ENCODE measurements at regions of chr2 and their contacts with region 1.

Region 1: GRCh38 chr2:179751163-179751809 is 110.1 kb downstream of the ZNF385B start:
- DNase-seq: peak; percentile 9
- H3K4me3 ChIP-seq: no peak overlapping the region
- H3K27ac ChIP-seq: no peak overlapping the region
- H3K4me1 ChIP-seq: no peaks in the 10 kb centered on the region
- H3K27me3 ChIP-seq: no peaks in the 10 kb centered on the region
- CTCF ChIP-seq: peak; percentile 54 to 59

Region 2: DNA sequence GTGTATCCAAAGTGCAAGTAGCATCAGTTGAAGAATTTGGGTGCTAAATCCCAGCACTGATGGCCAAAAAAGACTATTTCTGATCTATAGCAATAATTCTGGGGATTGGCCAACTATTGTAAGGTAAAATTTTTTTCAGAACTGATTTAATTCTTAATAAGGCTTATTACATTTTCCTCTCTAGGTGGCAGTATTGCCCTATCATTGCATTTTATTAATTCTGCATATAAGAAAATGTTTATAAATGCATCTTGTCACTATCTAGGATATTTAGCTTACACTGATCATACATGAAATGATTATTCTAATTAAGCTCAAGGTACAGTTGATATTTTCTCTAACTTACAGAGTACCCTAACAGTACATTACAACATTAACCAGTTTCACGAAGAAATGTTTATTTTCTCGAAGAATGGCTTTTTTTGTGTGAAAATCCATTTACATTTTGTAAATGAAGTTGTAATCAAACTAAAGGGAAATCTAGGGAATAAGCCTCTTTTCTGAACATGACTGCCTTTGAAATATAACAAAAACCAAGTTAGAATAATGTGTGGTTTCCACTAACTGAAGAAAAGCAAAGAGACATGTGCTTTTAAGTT is 955.1 kb before region 1 on chr2:
- CTCF ChIA-PET with region 1: no interaction called
- dilution Hi-C with region 1: no loop called
- in situ Hi-C with region 1: no loop called
- intact Hi-C with region 1: loop called (anchors 2 kb)
- DNase-seq: peak; percentile 10
- H3K4me3 ChIP-seq: no peak overlapping the region
- H3K27ac ChIP-seq: no peak overlapping the region
- H3K4me1 ChIP-seq: no peaks in the 10 kb centered on the region
- H3K27me3 ChIP-seq: no peaks in the 10 kb centered on the region
- CTCF ChIP-seq: peak; percentile 40 to 57

Region 3: GRCh38 chr2:179218848-179219594 is 532.3 kb before region 1 on chr2:
- CTCF ChIA-PET with region 1: no interaction called
- dilution Hi-C with region 1: no loop called
- in situ Hi-C with region 1: no loop called
- intact Hi-C with region 1: loop called (anchors 2 kb)
- DNase-seq: peak; percentile 65
- H3K4me3 ChIP-seq: no peak overlapping the region
- H3K27ac ChIP-seq: no peak overlapping the region
- H3K4me1 ChIP-seq: no peaks in the 10 kb centered on the region
- H3K27me3 ChIP-seq: no peaks in the 10 kb centered on the region
- CTCF ChIP-seq: peak; percentile 94 to 98

Region 4: DNA sequence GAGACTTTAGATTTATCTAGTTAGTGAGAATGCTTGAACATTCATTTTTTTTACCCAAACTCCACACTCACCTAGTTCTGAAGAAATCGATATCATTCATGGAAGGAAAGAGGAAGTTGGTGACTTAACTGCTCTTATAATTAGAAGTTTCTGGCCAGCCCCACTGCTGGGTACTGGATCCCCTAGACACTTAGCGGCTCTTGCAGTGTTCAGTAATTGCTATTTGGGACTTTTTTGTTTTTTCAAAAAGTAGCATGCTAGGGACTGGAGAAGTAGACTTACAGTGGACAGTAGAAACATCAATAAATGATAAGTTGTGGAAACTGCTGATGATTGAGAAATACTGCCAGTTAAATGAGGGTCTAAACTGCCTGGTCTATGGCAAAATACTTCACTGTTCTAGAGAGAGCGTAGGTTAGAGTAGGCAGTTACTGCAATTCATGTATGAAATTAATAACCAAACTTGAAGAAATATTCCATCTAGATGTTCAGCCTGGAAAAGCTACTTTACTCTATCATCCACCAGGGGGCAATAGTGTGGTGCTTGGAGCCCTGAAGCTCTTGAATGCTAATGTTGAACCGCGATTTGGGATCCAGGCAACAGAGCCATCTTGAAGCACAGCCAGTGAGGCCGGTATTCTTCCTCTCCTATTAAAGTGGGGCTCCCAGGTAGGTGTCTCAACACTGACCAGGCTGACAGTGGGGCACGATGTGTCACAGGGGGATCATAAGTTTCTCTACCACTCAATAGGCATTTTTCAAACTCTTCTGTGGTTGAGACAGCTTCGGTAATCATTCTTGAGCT is 340.5 kb before region 1 on chr2:
- CTCF ChIA-PET with region 1: no interaction called
- dilution Hi-C with region 1: no loop called
- in situ Hi-C with region 1: loop called in 1 of 2 experiments (anchors 10 kb)
- intact Hi-C with region 1: loop called (anchors 1 kb)
- DNase-seq: peak; percentile 48
- H3K4me3 ChIP-seq: no peak overlapping the region
- H3K27ac ChIP-seq: no peak overlapping the region
- H3K4me1 ChIP-seq: no peaks in the 10 kb centered on the region
- H3K27me3 ChIP-seq: no peaks in the 10 kb centered on the region
- CTCF ChIP-seq: peak; percentile 80 to 84

Region 5: GRCh38 chr2:179422037-179422643 is 329.1 kb before region 1 on chr2:
- CTCF ChIA-PET with region 1: no interaction called
- dilution Hi-C with region 1: no loop called
- in situ Hi-C with region 1: loop called (anchors 10 kb)
- intact Hi-C with region 1: loop called (anchors 1 kb)
- DNase-seq: peak; percentile 47
- H3K4me3 ChIP-seq: no peak overlapping the region
- H3K27ac ChIP-seq: no peak overlapping the region
- H3K4me1 ChIP-seq: no peaks in the 10 kb centered on the region
- H3K27me3 ChIP-seq: no peaks in the 10 kb centered on the region
- CTCF ChIP-seq: peak; percentile 88 to 92

Region 6: DNA sequence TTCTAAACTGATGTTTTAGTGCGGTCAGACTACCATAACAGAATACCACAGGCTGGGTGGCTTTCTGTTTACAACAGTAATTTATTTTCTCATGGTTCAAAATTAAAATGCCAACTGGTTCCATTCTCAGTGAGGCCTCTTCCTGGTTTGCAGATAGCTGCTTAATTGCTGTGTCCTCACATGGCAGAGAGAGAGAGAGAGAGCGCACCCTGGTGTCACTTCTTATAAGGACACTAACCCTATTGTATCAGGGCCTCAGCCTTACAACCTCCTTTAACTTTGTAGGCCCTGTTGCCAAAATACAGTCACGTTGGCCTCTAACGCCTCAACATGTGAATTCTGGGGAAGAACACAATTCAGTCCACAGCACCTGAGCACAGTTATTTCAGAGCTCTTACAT is 147.6 kb after region 1 on chr2:
- CTCF ChIA-PET with region 1: no interaction called
- dilution Hi-C with region 1: no loop called
- in situ Hi-C with region 1: no loop called
- intact Hi-C with region 1: loop called (anchors 5 kb)
- DNase-seq: peak; percentile 26
- H3K4me3 ChIP-seq: no peak overlapping the region
- H3K27ac ChIP-seq: no peak overlapping the region
- H3K4me1 ChIP-seq: no peaks in the 10 kb centered on the region
- H3K27me3 ChIP-seq: no peaks in the 10 kb centered on the region
- CTCF ChIP-seq: peak; percentile 5 to 43

Region 7: DNA sequence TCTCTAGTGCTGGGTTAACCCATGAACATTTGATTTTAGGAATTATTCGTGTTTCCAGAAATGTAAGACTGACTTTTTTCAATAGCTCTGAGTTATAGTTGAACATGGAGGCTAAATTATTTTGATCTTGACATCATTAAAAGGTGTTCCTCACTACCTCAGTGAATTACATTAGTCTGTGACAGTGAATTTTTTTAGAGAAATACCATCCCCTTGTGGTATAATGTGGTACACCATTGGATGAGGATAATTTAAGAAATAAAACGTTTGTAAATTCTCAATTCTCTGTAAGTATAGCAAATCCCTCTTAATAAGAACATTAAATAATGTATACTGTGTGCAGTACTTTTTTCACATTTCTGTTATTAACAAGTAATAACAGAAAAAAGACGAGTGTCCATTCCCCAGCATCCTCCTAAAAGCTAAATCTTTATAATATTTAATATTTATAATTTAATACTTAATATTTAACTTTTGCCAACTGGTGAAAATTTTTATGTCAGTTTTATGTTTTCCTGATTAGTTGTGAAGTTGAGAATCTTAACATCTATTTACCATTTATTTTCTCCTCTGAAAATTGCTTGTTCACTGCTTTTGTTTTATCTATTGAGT is 326.1 kb after region 1 on chr2:
- CTCF ChIA-PET with region 1: no interaction called
- dilution Hi-C with region 1: no loop called
- in situ Hi-C with region 1: no loop called
- intact Hi-C with region 1: loop called (anchors 2 kb)
- DNase-seq: peak; percentile 6
- H3K4me3 ChIP-seq: no peak overlapping the region
- H3K27ac ChIP-seq: no peak overlapping the region
- H3K4me1 ChIP-seq: no peaks in the 10 kb centered on the region
- H3K27me3 ChIP-seq: peaks cover 2% of the 10 kb centered on the region
- CTCF ChIP-seq: peak; percentile 79 to 92